ENCODE measurements at regions of chr10 and their contacts with region 1.

Region 1: GRCh38 chr10:511101-511848 is 178.2 kb downstream of the DIP2C start:
- DNase-seq: peak; percentile 85 to 93
- ATAC-seq: peak; percentile 94 to 98
- H3K4me3 ChIP-seq: no peak overlapping the region
- H3K27ac ChIP-seq: peak overlapping the region in 1 of 2 experiments; percentile 14; a peak in 1 of 6 replicates
- H3K4me1 ChIP-seq: no peaks in the 10 kb centered on the region
- CTCF ChIP-seq: peak; percentile 92
- EP300 ChIP-seq: no peak
- POLR2A ChIP-seq: no peak
- RAD21 ChIP-seq: peak; percentile 83 to 89

Region 2: GRCh38 chr10:451021-451471 is 60.2 kb before region 1 on chr10:
- CTCF ChIA-PET with region 1: no interaction called
- POLR2A ChIA-PET with region 1: no interaction called
- DNase-seq: no peak
- ATAC-seq: peak in 1 of 2 experiments; percentile 17; a peak in 1 of 6 replicates
- H3K4me3 ChIP-seq: no peak overlapping the region
- H3K27ac ChIP-seq: no peak overlapping the region
- H3K4me1 ChIP-seq: peaks cover 11% of the 10 kb centered on the region; the same call in 2 of the 3 replicates
- CTCF ChIP-seq: no peak
- EP300 ChIP-seq: no peak
- POLR2A ChIP-seq: no peak
- RAD21 ChIP-seq: no peak

Region 3: DNA sequence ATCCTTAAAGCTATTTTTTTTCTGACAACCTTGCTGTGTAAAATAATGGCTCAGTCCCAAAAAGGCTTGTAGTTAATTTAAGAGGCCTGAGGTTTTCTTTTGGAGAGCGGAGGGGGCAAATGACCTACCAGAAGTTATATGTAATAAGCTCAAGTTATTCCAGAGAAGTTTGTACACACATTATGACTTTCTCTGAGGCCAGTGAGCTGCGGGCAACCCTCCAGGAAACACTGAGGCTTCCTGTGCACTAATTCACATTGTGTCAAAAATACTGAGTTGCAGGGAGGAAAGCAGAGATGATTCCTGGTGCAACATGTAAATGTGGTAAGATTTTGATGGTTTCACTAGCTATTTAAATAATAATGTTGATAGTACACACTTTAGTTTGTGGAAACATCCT is 10.4 kb before region 1 on chr10:
- CTCF ChIA-PET with region 1: interaction called, 30 read pairs
- POLR2A ChIA-PET with region 1: no interaction called
- DNase-seq: no peak
- ATAC-seq: no peak
- H3K4me3 ChIP-seq: no peak overlapping the region
- H3K27ac ChIP-seq: no peak overlapping the region
- H3K4me1 ChIP-seq: no peaks in the 10 kb centered on the region
- CTCF ChIP-seq: no peak
- EP300 ChIP-seq: no peak
- POLR2A ChIP-seq: no peak
- RAD21 ChIP-seq: no peak

Region 4: GRCh38 chr10:526651-527311 is 15.5 kb after region 1 on chr10:
- CTCF ChIA-PET with region 1: interaction called, 24 read pairs
- POLR2A ChIA-PET with region 1: no interaction called
- DNase-seq: no peak
- ATAC-seq: peak in 1 of 2 experiments; percentile 43; a peak in 2 of 6 replicates
- H3K4me3 ChIP-seq: no peak overlapping the region
- H3K27ac ChIP-seq: no peak overlapping the region
- H3K4me1 ChIP-seq: no peaks in the 10 kb centered on the region
- CTCF ChIP-seq: no peak
- EP300 ChIP-seq: no peak
- POLR2A ChIP-seq: no peak
- RAD21 ChIP-seq: no peak